HEK293 (cell line): ENCODE measurements at regions of chr22 and their contacts with region 1.

Region 1: DNA sequence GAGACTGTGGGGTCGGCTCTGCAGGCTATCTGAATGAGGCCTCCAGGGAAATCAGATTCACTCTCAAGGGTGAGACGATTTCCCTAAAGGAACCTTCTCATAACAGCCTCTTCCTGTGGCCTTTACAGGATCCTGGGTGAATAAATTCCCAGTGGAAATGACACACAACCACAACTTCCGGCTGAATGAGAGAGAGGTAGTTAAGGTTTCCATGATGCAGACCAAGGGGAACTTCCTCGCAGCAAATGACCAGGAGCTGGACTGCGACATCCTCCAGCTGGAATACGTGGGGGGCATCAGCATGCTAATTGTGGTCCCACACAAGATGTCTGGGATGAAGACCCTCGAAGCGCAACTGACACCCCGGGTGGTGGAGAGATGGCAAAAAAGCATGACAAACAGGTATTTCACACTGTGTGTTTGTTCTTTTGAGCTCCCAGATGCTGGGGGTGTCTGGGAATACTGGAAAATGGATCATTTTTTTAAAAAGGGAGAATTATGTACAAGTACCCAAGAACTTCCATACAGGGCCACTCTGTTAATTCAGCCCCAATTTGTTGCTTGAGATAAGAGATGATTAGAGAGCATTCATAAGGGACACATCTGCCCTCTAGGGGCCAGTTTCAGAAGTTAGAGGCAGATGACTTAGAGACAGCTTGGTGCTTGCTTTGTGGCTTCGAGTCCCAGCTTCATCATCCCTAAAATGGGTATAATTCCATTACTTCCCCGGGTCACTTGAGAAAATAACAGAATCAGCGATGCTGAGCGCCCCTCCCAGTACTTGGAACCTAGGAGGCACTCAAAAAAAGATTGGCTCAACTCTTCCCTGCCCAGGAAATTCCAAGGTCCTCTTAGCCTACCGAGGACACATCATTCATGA is 10.2 kb downstream of the SERPIND1 start:
- H3K4me3 ChIP-seq: no peak overlapping the region
- H3K27ac ChIP-seq: no peak overlapping the region
- H3K4me1 ChIP-seq: no peaks in the 10 kb centered on the region
- CTCF ChIP-seq: peak; percentile 34; the same call in 1 of the 2 replicates

Region 2: GRCh38 chr22:20599117-20599516 is 185.0 kb before region 1 on chr22:
- CTCF ChIA-PET with region 1: no interaction called
- POLR2A ChIA-PET with region 1: no interaction called
- H3K4me3 ChIP-seq: no peak overlapping the region
- H3K27ac ChIP-seq: no peak overlapping the region
- H3K4me1 ChIP-seq: no peaks in the 10 kb centered on the region
- CTCF ChIP-seq: no peak

Region 3: GRCh38 chr22:20756846-20757245 is 27.2 kb before region 1 on chr22:
- CTCF ChIA-PET with region 1: interaction called, 15 read pairs
- POLR2A ChIA-PET with region 1: no interaction called
- H3K4me3 ChIP-seq: no peak overlapping the region
- H3K27ac ChIP-seq: no peak overlapping the region
- H3K4me1 ChIP-seq: no peaks in the 10 kb centered on the region
- CTCF ChIP-seq: no peak

Region 4: DNA sequence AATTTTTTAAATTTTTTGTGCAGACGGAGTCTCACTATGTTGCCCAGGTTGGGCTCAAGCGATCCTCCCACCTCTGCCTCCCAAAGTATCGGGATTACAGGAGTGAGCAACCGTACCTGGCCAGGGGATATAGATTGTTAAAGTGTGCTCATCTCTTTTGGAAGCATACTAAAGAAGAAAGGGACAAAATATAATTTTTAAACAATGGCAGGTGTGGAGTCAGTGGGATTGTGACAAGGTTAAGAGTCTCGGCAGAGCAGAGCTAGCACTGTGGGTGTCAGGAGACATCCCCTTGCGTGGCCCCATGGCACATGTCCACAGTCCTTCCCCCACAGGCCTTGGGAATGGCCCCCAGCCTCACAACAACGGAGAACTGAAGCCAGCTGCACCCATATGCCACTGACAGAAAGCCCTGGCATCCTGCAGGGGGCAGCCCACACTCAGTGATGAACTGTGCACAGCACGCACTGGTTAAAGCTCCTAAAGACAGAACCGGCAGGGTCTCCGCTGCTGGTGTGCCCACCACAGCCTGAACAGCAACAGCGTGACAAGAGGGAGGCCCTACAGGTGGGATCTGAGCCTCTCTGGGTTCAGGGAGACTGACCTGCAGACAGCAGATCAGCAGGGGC is 19.7 kb after region 1 on chr22:
- CTCF ChIA-PET with region 1: interaction called, 14 read pairs
- POLR2A ChIA-PET with region 1: no interaction called
- H3K4me3 ChIP-seq: no peak overlapping the region
- H3K27ac ChIP-seq: no peak overlapping the region
- H3K4me1 ChIP-seq: no peaks in the 10 kb centered on the region
- CTCF ChIP-seq: peak; percentile 56; the same call in 1 of the 2 replicates

Region 5: GRCh38 chr22:20829491-20830134 is 45.5 kb after region 1 on chr22:
- CTCF ChIA-PET with region 1: no interaction called
- POLR2A ChIA-PET with region 1: no interaction called
- H3K4me3 ChIP-seq: no peak overlapping the region
- H3K27ac ChIP-seq: no peak overlapping the region
- H3K4me1 ChIP-seq: no peaks in the 10 kb centered on the region
- CTCF ChIP-seq: no peak